Dorsolateral prefrontal cortex (tissue), 120 donors: ENCODE measurements at regions of chr12 and their contacts with region 1.

Region 1: GRCh38 chr12:45990468-45991283 is at the start of gene SCAF11:
- DNase-seq: peak; percentile 99 to 100 (median 100)
- H3K4me3 ChIP-seq: peak within 1 kb of the TSS; percentile 64 to 99 (median 88)
- H3K27ac ChIP-seq: peak within 1 kb of the TSS; percentile 92 to 99 (median 98)
- H3K27me3 ChIP-seq: no peaks in the 10 kb centered on the region
- CTCF ChIP-seq: peak; percentile 83 to 99 (median 94)
- total RNA-seq, gene SCAF11: 54.6 to 110 (median 75.2) TPM

Region 2: DNA sequence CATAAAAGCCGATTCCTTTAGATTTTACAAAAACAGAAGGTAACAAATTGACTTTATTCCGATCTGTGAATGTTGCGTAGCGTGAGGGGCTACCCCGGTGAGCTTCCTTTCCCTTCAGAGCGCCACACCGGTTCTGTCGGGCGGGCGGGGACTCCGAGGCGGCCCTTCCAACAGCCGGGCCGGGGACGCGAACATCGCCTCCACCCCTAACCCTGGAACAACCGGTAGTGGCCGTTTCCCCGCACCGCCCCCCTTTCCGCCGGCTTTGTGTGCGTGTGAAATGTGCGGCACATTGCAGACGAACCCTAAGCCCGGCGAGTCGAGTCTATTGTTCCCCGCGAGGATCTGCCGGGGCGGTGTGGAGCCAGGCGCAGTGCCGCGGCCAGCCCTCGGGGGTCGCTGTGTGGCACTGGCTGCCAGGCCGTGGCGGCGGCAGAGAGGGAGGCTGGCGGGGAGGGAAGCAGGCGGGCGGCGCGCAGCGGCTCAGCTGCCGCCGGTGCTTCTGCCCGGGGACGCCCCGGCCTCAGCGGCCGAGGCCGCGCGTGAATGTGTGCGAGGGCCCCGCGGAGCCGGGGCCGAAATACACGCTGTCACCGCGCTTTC is 261.9 kb before region 1 on chr12:
- intact Hi-C with region 1: loop called (anchors 1 kb)
- DNase-seq: peak; percentile 93 to 98 (median 96)
- H3K4me3 ChIP-seq: peak overlapping the region; percentile 54 to 97 (median 88)
- H3K27ac ChIP-seq: peak overlapping the region; percentile 95 to 100 (median 99)
- H3K27me3 ChIP-seq: no peaks in the 10 kb centered on the region
- CTCF ChIP-seq: peak; percentile 58 to 97 (median 82)

Region 3: GRCh38 chr12:45859915-45860314 is 130.8 kb before region 1 on chr12:
- intact Hi-C with region 1: no loop called
- DNase-seq: no peak
- H3K4me3 ChIP-seq: no peak overlapping the region
- H3K27ac ChIP-seq: no peak overlapping the region
- H3K27me3 ChIP-seq: no peaks in the 10 kb centered on the region
- CTCF ChIP-seq: no peak

Region 4: GRCh38 chr12:45893240-45893639 is 97.4 kb before region 1 on chr12:
- intact Hi-C with region 1: loop called in 1 of 2 experiments (anchors 2 kb)
- DNase-seq: peak in 1 of 10 donors; percentile 16
- H3K4me3 ChIP-seq: no peak overlapping the region
- H3K27ac ChIP-seq: peak overlapping the region in 6 of 59 donors; percentile 11 to 55 (median 42)
- H3K27me3 ChIP-seq: no peaks in the 10 kb centered on the region
- CTCF ChIP-seq: peak in 46 of 56 donors; percentile 14 to 66 (median 40)

Region 5: DNA sequence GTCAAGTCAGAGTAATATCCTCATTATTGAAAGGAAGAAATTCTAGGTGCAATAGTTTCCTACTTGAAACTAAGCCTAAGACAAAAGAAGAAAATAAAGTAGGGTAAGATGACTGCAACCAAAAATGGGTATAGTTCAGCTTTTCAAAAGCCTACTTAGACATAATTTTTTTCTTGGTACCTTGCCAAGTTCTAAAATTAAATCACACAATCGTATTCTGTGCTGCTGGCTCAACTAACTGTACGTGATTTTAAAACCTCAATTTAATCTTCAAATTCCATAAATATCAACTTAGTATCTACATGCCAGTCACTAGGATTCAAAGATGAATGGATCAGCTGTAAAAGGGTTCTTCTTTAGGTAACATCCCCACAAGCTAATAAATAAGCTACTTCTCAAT is 57.2 kb before region 1 on chr12:
- intact Hi-C with region 1: no loop called
- DNase-seq: no peak
- H3K4me3 ChIP-seq: no peak overlapping the region
- H3K27ac ChIP-seq: peak overlapping the region in 3 of 59 donors; percentile 10 to 60 (median 14)
- H3K27me3 ChIP-seq: no peaks in the 10 kb centered on the region
- CTCF ChIP-seq: no peak

Region 6: GRCh38 chr12:46268590-46269558 is 278.2 kb after region 1 on chr12 and contains the start of gene SLC38A1:
- intact Hi-C with region 1: loop called in 1 of 2 experiments (anchors 2 kb)
- DNase-seq: peak; percentile 56 to 90 (median 83)
- H3K4me3 ChIP-seq: peak within 1 kb of the TSS; percentile 53 to 89 (median 74)
- H3K27ac ChIP-seq: peak within 1 kb of the TSS in 58 of 59 donors; percentile 47 to 95 (median 84)
- H3K27me3 ChIP-seq: peaks cover 0 to 23% (median 0%) of the 10 kb centered on the region in 45 donors
- CTCF ChIP-seq: peak in 2 of 56 donors; percentile 7 to 27
- total RNA-seq, gene SLC38A1: 59.0 to 128 (median 90.2) TPM

Region 7: DNA sequence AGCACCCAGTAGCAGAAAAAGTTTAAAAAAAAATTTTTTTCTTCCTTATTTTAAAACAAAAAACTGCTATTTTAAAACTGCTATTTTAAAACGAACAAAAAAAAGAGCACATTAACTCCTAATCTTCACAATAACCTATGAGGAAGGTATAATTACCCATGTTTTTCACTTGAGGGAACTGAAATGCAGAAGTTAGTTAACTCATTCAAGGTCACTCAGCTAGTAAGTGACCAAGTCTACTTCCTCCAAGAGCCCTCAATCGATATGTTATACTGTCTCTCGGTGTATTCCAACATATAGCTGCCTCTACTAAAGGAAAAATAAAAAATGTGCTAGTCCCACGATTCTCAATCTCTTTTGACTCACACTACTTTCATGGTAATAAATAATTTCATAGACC is 1707.4 kb after region 1 on chr12:
- intact Hi-C with region 1: loop called in 1 of 2 experiments (anchors 5 kb)
- DNase-seq: no peak
- H3K4me3 ChIP-seq: no peak overlapping the region
- H3K27ac ChIP-seq: no peak overlapping the region
- H3K27me3 ChIP-seq: no peaks in the 10 kb centered on the region
- CTCF ChIP-seq: no peak